Esophagus muscularis mucosa (tissue), 4 donors: ENCODE measurements at regions of chr7 and their contacts with region 1.

Region 1: GRCh38 chr7:64999165-65000004 is 7.1 kb downstream of the ERV3-1 start:
- DNase-seq: no peak
- H3K4me3 ChIP-seq: no peak overlapping the region
- H3K27ac ChIP-seq: peak overlapping the region in 3 of 4 donors; percentile 20 to 80 (median 71)
- H3K4me1 ChIP-seq: peaks cover 23 to 45% (median 28%) of the 10 kb centered on the region in 4 donors
- H3K27me3 ChIP-seq: no peaks in the 10 kb centered on the region
- CTCF ChIP-seq: no peak
- EP300 ChIP-seq: no peak
- POLR2A ChIP-seq: no peak

Region 2: DNA sequence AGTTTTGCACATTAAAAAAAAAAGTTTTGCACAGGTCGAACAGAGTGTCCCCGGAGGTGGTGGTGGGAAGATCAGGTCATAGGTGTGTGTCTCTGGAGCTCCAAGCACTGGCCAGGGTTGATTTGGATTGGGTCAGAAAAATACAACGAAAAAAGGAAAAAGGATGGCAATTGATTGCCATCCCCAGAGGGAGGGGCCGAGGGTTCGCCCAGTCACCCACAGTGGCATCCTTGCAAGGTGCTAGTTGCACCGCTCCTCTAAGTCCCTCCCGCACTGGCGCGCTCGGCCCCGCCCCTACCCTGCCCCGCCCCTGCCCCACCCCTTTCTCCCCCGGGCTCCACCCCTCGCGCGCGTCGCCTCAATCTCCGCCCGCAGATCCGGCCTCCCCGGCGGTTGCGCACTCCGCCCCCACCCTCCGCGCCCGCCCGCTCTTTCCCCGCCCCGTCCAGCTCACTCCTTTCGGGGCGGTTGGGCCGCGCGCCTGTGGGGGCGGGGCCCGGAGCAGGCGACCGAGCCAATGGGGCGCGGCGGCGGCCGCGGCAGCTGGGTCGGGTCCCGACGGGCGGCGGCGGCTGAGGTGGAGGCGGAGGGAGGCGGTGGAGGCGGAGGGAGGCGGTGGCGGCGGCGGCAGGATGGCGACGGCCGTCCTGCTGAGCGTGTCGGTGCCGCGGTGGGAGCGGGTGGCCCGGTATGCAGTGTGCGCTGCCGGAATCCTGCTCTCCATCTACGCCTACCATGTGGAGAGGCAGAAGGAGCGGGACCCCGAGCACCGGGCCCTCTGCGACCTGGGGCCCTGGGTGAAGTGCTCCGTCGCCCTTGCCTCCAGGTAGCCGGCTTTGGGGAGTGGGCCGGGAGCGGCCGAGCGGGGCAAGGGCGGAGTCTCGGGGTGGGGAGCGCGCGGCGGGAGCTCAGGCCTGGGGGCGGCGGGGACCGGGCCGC is 38.6 kb after region 1 on chr7:
- intact Hi-C with region 1: loop called (anchors 2 kb)
- DNase-seq: peak; percentile 99
- H3K4me3 ChIP-seq: peak overlapping the region; percentile 81 to 96 (median 84)
- H3K27ac ChIP-seq: peak overlapping the region; percentile 89 to 94 (median 92)
- H3K4me1 ChIP-seq: peaks cover 9 to 26% (median 22%) of the 10 kb centered on the region in 4 donors
- H3K27me3 ChIP-seq: no peaks in the 10 kb centered on the region
- CTCF ChIP-seq: no peak
- EP300 ChIP-seq: no peak
- POLR2A ChIP-seq: no peak

Region 3: GRCh38 chr7:66429498-66430163 is 1430.2 kb after region 1 on chr7:
- intact Hi-C with region 1: no loop called
- DNase-seq: no peak
- H3K4me3 ChIP-seq: no peak overlapping the region
- H3K27ac ChIP-seq: no peak overlapping the region
- H3K4me1 ChIP-seq: no peaks in the 10 kb centered on the region
- H3K27me3 ChIP-seq: no peaks in the 10 kb centered on the region
- CTCF ChIP-seq: no peak
- EP300 ChIP-seq: no peak
- POLR2A ChIP-seq: no peak